GM10248 (cell line): ENCODE measurements at regions of chr2 and their contacts with region 1.

Region 1: GRCh38 chr2:191601060-191601459 is 76.9 kb upstream of the NABP1 start:
- DNase-seq: no peak
- CTCF ChIP-seq: no peak

Region 2: GRCh38 chr2:191582355-191582754 is 18.7 kb before region 1 on chr2:
- CTCF ChIA-PET with region 1: interaction called, 11 read pairs
- POLR2A ChIA-PET with region 1: no interaction called
- DNase-seq: no peak
- CTCF ChIP-seq: no peak